ENCODE measurements at regions of chr3 and their contacts with region 1.

Region 1: GRCh38 chr3:129016356-129016719 is 15.2 kb downstream of the EFCC1 start:
- DNase-seq: peak; percentile 82
- ATAC-seq: peak; percentile 85
- H3K4me3 Mint-ChIP-seq: peak overlapping the region; percentile 71
- H3K27ac Mint-ChIP-seq: peak overlapping the region; percentile 97
- H3K4me1 Mint-ChIP-seq: peaks cover 31% of the 10 kb centered on the region
- H3K27me3 Mint-ChIP-seq: no peaks in the 10 kb centered on the region
- CTCF ChIP-seq: peak; percentile 34

Region 2: GRCh38 chr3:128854475-128854874 is 161.9 kb before region 1 on chr3:
- CTCF ChIA-PET with region 1: no interaction called
- POLR2A ChIA-PET with region 1: no interaction called
- intact Hi-C with region 1: no loop called
- DNase-seq: no peak
- ATAC-seq: no peak
- H3K4me3 Mint-ChIP-seq: no peak overlapping the region
- H3K27ac Mint-ChIP-seq: no peak overlapping the region
- H3K4me1 Mint-ChIP-seq: no peaks in the 10 kb centered on the region
- H3K27me3 Mint-ChIP-seq: no peaks in the 10 kb centered on the region
- CTCF ChIP-seq: no peak

Region 3: GRCh38 chr3:128917291-128917690 is 99.0 kb before region 1 on chr3:
- CTCF ChIA-PET with region 1: no interaction called
- POLR2A ChIA-PET with region 1: no interaction called
- intact Hi-C with region 1: no loop called
- DNase-seq: no peak
- ATAC-seq: no peak
- H3K4me3 Mint-ChIP-seq: no peak overlapping the region
- H3K27ac Mint-ChIP-seq: no peak overlapping the region
- H3K4me1 Mint-ChIP-seq: peaks cover 14% of the 10 kb centered on the region
- H3K27me3 Mint-ChIP-seq: no peaks in the 10 kb centered on the region
- CTCF ChIP-seq: no peak

Region 4: DNA sequence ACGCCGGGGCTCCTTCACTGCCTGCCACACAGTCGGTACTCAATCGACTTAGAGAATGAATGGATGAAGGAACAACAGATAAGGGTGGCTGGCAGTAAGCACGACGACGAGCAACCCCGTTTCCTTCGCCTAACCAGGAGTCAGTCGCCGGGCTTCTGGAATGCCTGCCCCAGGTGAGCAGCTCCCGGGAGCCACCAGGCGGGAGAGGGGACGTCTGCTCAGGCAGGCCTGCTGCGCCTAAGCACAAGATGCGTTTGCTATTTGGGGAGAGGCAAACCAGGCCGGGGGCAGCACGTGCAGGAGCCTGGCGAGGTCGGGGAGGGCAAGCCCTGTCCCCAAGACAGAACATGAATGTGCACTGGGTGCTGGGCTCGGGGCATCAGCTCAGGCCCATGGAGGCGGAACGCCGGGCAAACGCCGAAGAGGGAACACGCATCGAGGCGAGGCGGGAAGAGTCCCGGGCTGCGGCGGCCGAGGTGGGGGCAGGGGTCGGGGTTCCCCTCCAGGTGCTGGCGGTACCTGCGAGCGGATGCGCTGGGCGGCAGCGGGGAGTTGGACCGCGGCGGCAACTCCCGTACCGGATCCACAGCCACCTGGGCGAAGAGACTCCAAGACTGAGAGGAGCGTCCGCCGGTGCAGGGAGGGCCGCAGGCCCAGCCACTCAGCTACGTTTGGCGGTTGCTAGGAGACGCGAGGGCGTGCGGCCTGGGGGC is 22.7 kb before region 1 on chr3 and contains the start of gene CFAP92:
- CTCF ChIA-PET with region 1: interaction called, 25 read pairs
- POLR2A ChIA-PET with region 1: interaction called, 9 read pairs
- intact Hi-C with region 1: no loop called
- DNase-seq: peak; percentile 93
- ATAC-seq: peak; percentile 98
- H3K4me3 Mint-ChIP-seq: peak within 1 kb of the TSS; percentile 63
- H3K27ac Mint-ChIP-seq: no peak within 1 kb of the TSS
- H3K4me1 Mint-ChIP-seq: peaks cover 30% of the 10 kb centered on the region
- H3K27me3 Mint-ChIP-seq: no peaks in the 10 kb centered on the region
- CTCF ChIP-seq: no peak
- total RNA-seq, gene CFAP92: 0.38 to 0.83 TPM

Region 5: GRCh38 chr3:129003578-129004160 is 12.7 kb before region 1 on chr3:
- CTCF ChIA-PET with region 1: interaction called, 66 read pairs
- POLR2A ChIA-PET with region 1: interaction called, 27 read pairs
- intact Hi-C with region 1: no loop called
- DNase-seq: peak; percentile 63
- ATAC-seq: peak; percentile 71
- H3K4me3 Mint-ChIP-seq: peak overlapping the region; percentile 71
- H3K27ac Mint-ChIP-seq: no peak overlapping the region
- H3K4me1 Mint-ChIP-seq: peaks cover 33% of the 10 kb centered on the region
- H3K27me3 Mint-ChIP-seq: peaks cover 20% of the 10 kb centered on the region
- CTCF ChIP-seq: no peak